ENCODE measurements at regions of chr12 and their contacts with region 1.

Region 1: GRCh38 chr12:68538726-68539614 is 71.7 kb upstream of the RAP1B start:
- DNase-seq: peak; percentile 73
- H3K4me3 Mint-ChIP-seq: peak overlapping the region; percentile 12
- H3K27ac Mint-ChIP-seq: peak overlapping the region; percentile 60
- H3K4me1 Mint-ChIP-seq: peaks cover 43% of the 10 kb centered on the region
- H3K27me3 Mint-ChIP-seq: no peaks in the 10 kb centered on the region

Region 2: DNA sequence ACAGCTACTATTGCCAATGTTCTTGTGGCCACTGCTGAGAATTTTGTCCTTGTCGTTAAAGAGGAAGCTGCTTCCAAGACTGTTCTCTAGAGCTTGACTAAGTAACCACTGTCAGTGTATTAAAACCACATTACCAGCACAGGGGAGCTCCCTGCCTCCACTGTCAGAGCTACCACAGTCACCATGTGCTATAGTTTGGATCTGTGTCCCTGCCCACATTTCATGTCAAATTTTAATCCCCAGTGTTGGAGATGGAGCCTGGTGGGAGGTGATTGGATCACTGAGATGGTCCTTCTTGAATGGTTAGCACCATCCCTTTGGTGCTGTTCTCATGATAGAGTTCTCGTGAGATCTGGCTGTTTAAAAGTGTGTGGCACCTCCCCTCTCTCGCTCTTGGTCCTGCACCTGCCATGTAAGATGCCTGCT is 48.5 kb after region 1 on chr12:
- CTCF ChIA-PET with region 1: interaction called, 3 read pairs
- POLR2A ChIA-PET with region 1: no interaction called
- intact Hi-C with region 1: loop called (anchors 2 kb)
- DNase-seq: peak; percentile 70
- H3K4me3 Mint-ChIP-seq: no peak overlapping the region
- H3K27ac Mint-ChIP-seq: peak overlapping the region; percentile 39
- H3K4me1 Mint-ChIP-seq: peaks cover 34% of the 10 kb centered on the region
- H3K27me3 Mint-ChIP-seq: no peaks in the 10 kb centered on the region